B cell (primary cell): ENCODE measurements at regions of chr5 and their contacts with region 1.

Region 1: DNA sequence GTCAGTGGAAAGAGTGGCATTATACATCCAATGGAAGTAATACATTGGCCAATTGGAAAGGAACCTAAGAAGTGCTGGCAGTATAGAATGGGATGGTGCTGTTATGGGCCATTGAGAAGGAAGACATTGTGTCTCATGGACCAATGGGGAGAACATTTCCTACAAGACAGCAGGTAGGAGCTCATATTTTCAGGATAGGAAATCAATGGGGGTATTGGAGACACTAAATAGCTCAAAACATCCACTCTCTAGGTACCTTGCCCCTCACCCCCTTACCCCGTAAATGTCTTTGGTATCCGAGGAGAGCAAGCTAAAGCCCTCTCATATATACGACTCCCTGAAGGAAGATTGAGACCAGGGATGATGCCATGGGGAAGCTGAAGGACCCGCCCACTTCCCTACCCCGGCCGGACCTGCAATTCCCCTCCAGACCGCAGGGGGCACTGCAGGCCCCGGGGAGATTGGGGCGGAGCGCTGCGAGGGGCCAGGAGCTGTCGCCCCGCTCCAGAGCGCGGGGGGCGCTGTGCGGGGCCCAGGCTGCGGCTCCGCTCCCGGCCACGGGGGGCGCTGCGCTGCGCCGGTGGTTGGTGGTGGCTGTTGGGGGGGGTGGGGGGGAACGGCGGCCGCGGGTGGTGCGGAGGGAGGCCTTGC is at the start of gene KDM3B:
- DNase-seq: peak; percentile 94
- ATAC-seq: peak; percentile 86
- H3K4me3 ChIP-seq: peak within 1 kb of the TSS; percentile 78 to 96 (median 89)
- H3K4me3 Mint-ChIP-seq: peak within 1 kb of the TSS; percentile 95
- H3K27ac ChIP-seq: peak within 1 kb of the TSS; percentile 97
- H3K27ac Mint-ChIP-seq: peak within 1 kb of the TSS; percentile 96
- H3K4me1 ChIP-seq: peaks cover 25 to 30% of the 10 kb centered on the region in 2 donors
- H3K4me1 Mint-ChIP-seq: peaks cover 46% of the 10 kb centered on the region
- H3K27me3 ChIP-seq: no peaks in the 10 kb centered on the region
- H3K27me3 Mint-ChIP-seq: no peaks in the 10 kb centered on the region
- CTCF ChIP-seq: peak; percentile 90
- total RNA-seq, gene KDM3B: 99.9 and 110 TPM in 2 replicates

Region 2: DNA sequence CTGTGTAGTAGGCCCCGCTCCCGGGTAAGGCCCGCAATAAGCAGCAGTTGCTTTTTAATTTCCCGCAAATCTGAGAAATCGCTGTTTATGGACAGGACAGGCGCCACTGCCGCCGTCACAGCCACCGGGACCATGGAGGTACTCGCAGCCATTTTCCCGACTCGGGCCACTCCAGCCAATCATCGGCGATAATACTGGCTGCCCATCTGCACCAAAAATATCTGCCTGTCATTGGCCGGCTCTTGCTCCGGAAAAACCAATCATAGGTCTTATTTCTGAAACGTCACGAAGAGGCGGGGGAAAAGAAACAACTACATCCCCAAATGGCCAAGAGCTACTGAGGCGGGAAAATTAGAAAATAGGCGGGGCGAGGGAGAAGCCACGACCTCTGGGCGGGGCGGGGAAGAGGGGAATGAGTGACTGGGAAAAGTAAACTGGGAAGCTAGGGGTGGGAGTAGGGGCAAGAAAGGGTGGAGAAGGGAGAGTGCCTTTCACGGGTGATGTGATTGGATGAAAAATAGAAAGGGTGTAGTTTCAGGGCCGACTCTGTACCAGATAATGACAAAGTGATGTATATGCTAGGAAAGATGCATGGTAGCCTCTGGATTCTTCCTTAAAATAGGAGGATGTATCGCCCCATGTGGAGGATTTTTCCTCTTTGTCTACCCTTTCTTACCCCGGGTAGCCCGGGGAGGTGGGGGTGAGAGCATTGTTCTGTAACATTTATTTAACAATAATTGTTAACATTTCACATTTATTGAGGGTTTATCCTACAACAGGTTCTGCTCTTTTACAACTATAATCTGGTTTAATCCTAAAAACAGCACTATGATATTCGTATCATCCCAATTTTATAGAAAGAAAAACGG is 138.8 kb before region 1 on chr5 and contains the start of gene CDC23:
- CTCF ChIA-PET with region 1: interaction called, 7 read pairs
- POLR2A ChIA-PET with region 1: interaction called, 4 read pairs
- intact Hi-C with region 1: loop called (anchors 1 kb)
- DNase-seq: peak; percentile 95
- ATAC-seq: peak; percentile 97
- H3K4me3 ChIP-seq: peak within 1 kb of the TSS; percentile 77 to 99 (median 93)
- H3K4me3 Mint-ChIP-seq: peak within 1 kb of the TSS; percentile 93
- H3K27ac ChIP-seq: peak within 1 kb of the TSS; percentile 52 to 87
- H3K27ac Mint-ChIP-seq: peak within 1 kb of the TSS; percentile 92
- H3K4me1 ChIP-seq: peaks cover 10 to 20% of the 10 kb centered on the region in 2 donors
- H3K4me1 Mint-ChIP-seq: peaks cover 19% of the 10 kb centered on the region
- H3K27me3 ChIP-seq: no peaks in the 10 kb centered on the region
- H3K27me3 Mint-ChIP-seq: no peaks in the 10 kb centered on the region
- CTCF ChIP-seq: no peak
- total RNA-seq, gene CDC23: 29.7 and 35.4 TPM in 2 replicates

Region 3: GRCh38 chr5:138337685-138338410 is 14.3 kb before region 1 on chr5 and contains the start of gene FAM53C:
- CTCF ChIA-PET with region 1: interaction called, 278 read pairs
- POLR2A ChIA-PET with region 1: interaction called, 107 read pairs
- intact Hi-C with region 1: loop called (anchors 1 kb)
- DNase-seq: peak; percentile 99
- ATAC-seq: peak; percentile 82
- H3K4me3 ChIP-seq: peak within 1 kb of the TSS; percentile 55 to 90 (median 67)
- H3K4me3 Mint-ChIP-seq: peak within 1 kb of the TSS; percentile 92
- H3K27ac ChIP-seq: peak within 1 kb of the TSS; percentile 96 to 99
- H3K27ac Mint-ChIP-seq: peak within 1 kb of the TSS; percentile 100
- H3K4me1 ChIP-seq: peaks cover 22 to 25% of the 10 kb centered on the region in 2 donors
- H3K4me1 Mint-ChIP-seq: peaks cover 35% of the 10 kb centered on the region
- H3K27me3 ChIP-seq: no peaks in the 10 kb centered on the region
- H3K27me3 Mint-ChIP-seq: no peaks in the 10 kb centered on the region
- CTCF ChIP-seq: no peak
- total RNA-seq, gene FAM53C: 29.3 and 29.8 TPM in 2 replicates

Region 4: DNA sequence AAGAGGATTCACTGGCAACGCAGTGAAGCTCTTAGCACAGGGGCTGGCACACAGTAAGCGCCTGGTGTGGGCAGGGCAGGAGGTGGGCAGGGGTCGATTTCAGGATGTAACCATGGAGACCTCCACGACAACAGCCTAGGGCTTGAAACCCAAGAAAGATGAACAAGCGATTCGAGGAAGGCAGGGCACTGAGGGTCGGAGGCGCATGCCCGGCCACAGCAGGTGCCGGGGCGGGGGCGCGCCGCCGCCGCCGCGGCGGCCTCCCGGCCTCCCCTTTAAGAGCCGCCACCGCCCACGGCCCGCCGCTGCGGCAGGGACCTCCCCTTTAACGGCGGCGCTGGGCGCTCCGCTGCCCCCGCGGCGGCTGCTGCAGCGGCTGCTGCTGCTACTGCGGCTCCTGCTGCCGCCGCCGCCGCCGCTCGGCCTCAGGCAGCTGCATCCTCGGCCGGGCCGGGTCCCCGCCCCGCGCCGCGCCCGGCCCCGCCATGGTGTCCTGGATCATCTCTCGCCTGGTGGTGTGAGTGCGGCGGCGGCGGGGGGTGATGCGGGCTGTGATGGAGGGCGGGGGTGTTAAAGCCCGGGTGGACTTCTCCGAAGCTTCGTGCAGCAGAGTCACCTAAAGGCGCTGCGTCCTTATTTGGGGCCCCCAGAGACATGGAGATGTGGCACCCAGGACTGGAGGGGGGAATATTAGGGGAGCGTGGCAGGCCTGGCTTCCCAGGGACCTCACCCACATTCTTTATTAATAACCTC is 86.7 kb after region 1 on chr5 and contains the start of gene REEP2:
- CTCF ChIA-PET with region 1: no interaction called
- POLR2A ChIA-PET with region 1: no interaction called
- intact Hi-C with region 1: loop called (anchors 10 kb)
- DNase-seq: peak; percentile 78
- ATAC-seq: peak; percentile 86
- H3K4me3 ChIP-seq: peak within 1 kb of the TSS in 4 of 5 experiments; percentile 22 to 56 (median 47)
- H3K4me3 Mint-ChIP-seq: peak within 1 kb of the TSS; percentile 86
- H3K27ac ChIP-seq: no peak within 1 kb of the TSS
- H3K27ac Mint-ChIP-seq: peak within 1 kb of the TSS; percentile 8
- H3K4me1 ChIP-seq: peaks cover 11 to 13% of the 10 kb centered on the region in 2 donors
- H3K4me1 Mint-ChIP-seq: peaks cover 13% of the 10 kb centered on the region
- H3K27me3 ChIP-seq: peaks cover 0 to 11% (median 3%) of the 10 kb centered on the region in 4 experiments
- H3K27me3 Mint-ChIP-seq: peaks cover 4% of the 10 kb centered on the region
- CTCF ChIP-seq: no peak
- total RNA-seq, gene REEP2: 0.20 and 0.44 TPM in 2 replicates

Region 5: GRCh38 chr5:138472353-138472752 is 120.2 kb after region 1 on chr5:
- CTCF ChIA-PET with region 1: no interaction called
- POLR2A ChIA-PET with region 1: no interaction called
- intact Hi-C with region 1: no loop called
- DNase-seq: no peak
- ATAC-seq: no peak
- H3K4me3 ChIP-seq: no peak overlapping the region
- H3K4me3 Mint-ChIP-seq: no peak overlapping the region
- H3K27ac ChIP-seq: no peak overlapping the region
- H3K27ac Mint-ChIP-seq: no peak overlapping the region
- H3K4me1 ChIP-seq: no peaks in the 10 kb centered on the region
- H3K4me1 Mint-ChIP-seq: peaks cover 12% of the 10 kb centered on the region
- H3K27me3 ChIP-seq: no peaks in the 10 kb centered on the region
- H3K27me3 Mint-ChIP-seq: peaks cover 10% of the 10 kb centered on the region
- CTCF ChIP-seq: no peak

Region 6: DNA sequence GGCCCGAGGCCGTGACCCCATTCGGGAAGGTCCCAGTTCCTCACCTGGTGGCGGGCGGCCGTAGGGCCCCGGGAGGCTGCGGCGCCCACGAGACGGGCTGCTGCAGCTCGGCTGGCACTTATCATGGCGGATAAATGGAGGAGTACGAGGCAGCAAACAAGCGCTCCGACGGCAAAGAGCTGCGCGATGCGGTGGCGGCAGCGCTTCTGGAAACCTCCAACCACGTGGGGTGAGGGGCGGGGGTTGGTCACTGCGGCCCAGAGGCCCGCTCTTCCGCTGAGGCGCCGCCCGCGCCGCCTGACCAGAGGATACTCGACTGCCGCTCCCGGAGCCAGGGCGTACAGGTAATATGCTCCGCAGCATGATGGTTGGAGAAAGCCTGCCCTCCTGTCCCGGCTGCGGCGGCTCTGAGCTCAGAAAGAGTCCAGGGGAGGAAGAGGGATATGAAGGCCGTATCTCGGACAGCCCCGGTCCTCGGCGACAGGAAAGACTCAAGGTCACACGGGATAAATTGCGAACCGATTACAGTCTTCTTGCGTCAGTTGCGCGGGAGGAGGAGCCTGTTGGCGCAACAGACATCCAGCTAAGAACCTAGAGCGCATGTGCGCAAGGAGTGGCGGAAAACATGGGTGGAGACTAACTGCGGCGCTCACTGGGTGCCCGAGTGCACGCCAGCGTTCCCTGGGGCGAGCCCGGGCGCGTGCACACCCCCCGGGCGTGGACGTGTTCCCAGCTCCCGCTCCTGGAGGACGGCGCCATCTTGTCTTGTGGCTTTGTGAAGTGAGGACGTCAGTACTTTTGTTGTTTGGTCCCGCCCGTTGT is 223.2 kb after region 1 on chr5 and contains the start of gene HSPA9:
- CTCF ChIA-PET with region 1: interaction called, 3 read pairs
- POLR2A ChIA-PET with region 1: interaction called, 6 read pairs
- intact Hi-C with region 1: loop called (anchors 1 kb)
- DNase-seq: peak; percentile 100
- ATAC-seq: peak; percentile 85
- H3K4me3 ChIP-seq: peak within 1 kb of the TSS; percentile 80 to 98 (median 96)
- H3K4me3 Mint-ChIP-seq: peak within 1 kb of the TSS; percentile 96
- H3K27ac ChIP-seq: peak within 1 kb of the TSS; percentile 99 to 100
- H3K27ac Mint-ChIP-seq: peak within 1 kb of the TSS; percentile 100
- H3K4me1 ChIP-seq: peaks cover 16% of the 10 kb centered on the region in 2 donors
- H3K4me1 Mint-ChIP-seq: peaks cover 30% of the 10 kb centered on the region
- H3K27me3 ChIP-seq: no peaks in the 10 kb centered on the region
- H3K27me3 Mint-ChIP-seq: no peaks in the 10 kb centered on the region
- CTCF ChIP-seq: no peak
- total RNA-seq, gene HSPA9: 139 and 142 TPM in 2 replicates